ENCODE measurements at regions of chr3 and their contacts with region 1.

Region 1: GRCh38 chr3:136075218-136075808 is 109.8 kb downstream of the PPP2R3A start:
- DNase-seq: peak; percentile 30 to 81 (median 48)
- ATAC-seq: peak; percentile 89
- H3K4me3 ChIP-seq: no peak overlapping the region
- H3K27ac ChIP-seq: no peak overlapping the region
- H3K4me1 ChIP-seq: no peaks in the 10 kb centered on the region
- H3K27me3 ChIP-seq: no peaks in the 10 kb centered on the region
- CTCF ChIP-seq: peak; percentile 66 to 90 (median 75)
- EP300 ChIP-seq: no peak
- POLR2A ChIP-seq: no peak
- RAD21 ChIP-seq: peak; percentile 92 to 95

Region 2: DNA sequence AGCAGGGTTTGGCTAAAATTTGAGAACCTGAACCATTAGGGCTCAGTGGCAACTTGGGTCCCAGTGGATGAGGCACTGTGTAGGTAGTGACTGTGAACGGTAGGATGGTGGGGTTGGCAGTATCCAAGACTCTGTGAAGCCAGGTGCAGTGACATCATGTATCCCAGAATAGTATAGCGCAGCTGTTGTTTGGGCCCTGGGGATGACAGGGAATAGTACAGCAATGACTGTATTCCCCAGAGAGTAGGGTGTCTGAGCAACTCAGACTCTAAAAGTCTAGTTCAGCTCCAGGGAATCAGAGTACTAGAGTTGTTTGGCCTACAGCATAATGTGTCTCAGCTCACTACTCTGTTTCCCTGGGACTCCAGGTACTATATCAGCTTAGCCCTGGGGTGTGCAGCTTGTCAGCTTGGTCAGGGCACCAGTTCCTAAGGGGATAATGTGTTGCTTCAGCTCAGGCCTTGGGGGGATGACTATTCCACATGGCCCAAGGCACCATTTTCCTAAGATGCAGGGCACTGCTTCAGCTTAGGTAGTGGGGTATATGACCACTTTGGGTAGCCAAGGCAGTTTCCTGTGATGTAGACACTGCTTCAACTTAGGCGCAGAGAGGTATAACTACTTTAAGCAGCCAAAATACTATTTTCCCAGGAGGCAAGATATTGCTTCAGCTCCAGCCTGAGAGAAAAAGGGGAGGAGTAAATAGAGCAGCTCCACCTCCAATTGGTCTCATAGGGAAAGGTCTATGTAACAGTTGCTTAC is 130.3 kb before region 1 on chr3:
- CTCF ChIA-PET with region 1: no interaction called
- POLR2A ChIA-PET with region 1: no interaction called
- in situ Hi-C with region 1: no loop called
- intact Hi-C with region 1: no loop called
- DNase-seq: no peak
- ATAC-seq: no peak
- H3K4me3 ChIP-seq: no peak overlapping the region
- H3K27ac ChIP-seq: no peak overlapping the region
- H3K4me1 ChIP-seq: no peaks in the 10 kb centered on the region
- H3K27me3 ChIP-seq: no peaks in the 10 kb centered on the region
- CTCF ChIP-seq: no peak
- EP300 ChIP-seq: no peak
- POLR2A ChIP-seq: no peak
- RAD21 ChIP-seq: no peak

Region 3: GRCh38 chr3:136120373-136121348 is 45.3 kb after region 1 on chr3:
- CTCF ChIA-PET with region 1: no interaction called
- POLR2A ChIA-PET with region 1: no interaction called
- in situ Hi-C with region 1: no loop called
- intact Hi-C with region 1: no loop called
- DNase-seq: no peak
- ATAC-seq: no peak
- H3K4me3 ChIP-seq: no peak overlapping the region
- H3K27ac ChIP-seq: no peak overlapping the region
- H3K4me1 ChIP-seq: no peaks in the 10 kb centered on the region
- H3K27me3 ChIP-seq: no peaks in the 10 kb centered on the region
- CTCF ChIP-seq: no peak
- EP300 ChIP-seq: no peak
- POLR2A ChIP-seq: no peak
- RAD21 ChIP-seq: no peak

Region 4: GRCh38 chr3:136250226-136250902 is 175.1 kb after region 1 on chr3 and contains the start of gene PCCB:
- CTCF ChIA-PET with region 1: no interaction called
- POLR2A ChIA-PET with region 1: no interaction called
- in situ Hi-C with region 1: loop called (anchors 5 kb)
- intact Hi-C with region 1: loop called (anchors 2 kb)
- DNase-seq: peak; percentile 84 to 92 (median 88)
- ATAC-seq: peak; percentile 97
- H3K4me3 ChIP-seq: peak within 1 kb of the TSS; percentile 58
- H3K27ac ChIP-seq: peak within 1 kb of the TSS; percentile 97
- H3K4me1 ChIP-seq: peaks cover 14 to 20% of the 10 kb centered on the region in 2 experiments; a peak in 4 of 5 replicates
- H3K27me3 ChIP-seq: no peaks in the 10 kb centered on the region
- CTCF ChIP-seq: peak; percentile 48 to 60 (median 53)
- EP300 ChIP-seq: no peak
- POLR2A ChIP-seq: peak; percentile 92
- RAD21 ChIP-seq: peak; percentile 16; a peak in 1 of 4 replicates
- polyA plus RNA-seq, gene PCCB: 69.5 to 83.7 TPM

Region 5: DNA sequence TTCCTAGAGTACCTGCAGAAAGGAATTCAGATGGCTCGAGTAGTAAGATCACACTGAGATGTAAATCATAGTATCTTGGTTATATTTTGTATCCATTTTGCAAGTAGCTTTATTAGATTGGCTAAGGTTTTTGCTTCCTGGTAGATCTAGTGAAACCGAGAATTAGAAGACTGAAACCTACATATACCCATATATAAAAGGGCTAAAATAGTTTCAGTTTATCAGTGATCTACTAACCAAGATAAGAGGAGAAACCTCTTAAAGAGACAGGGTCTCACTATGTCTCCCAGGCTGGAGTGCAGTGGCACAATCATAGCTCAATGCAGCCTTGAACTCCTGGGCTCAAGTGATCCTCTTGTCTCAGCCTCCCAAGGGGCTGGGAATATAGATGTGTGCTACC is 310.1 kb after region 1 on chr3:
- CTCF ChIA-PET with region 1: no interaction called
- POLR2A ChIA-PET with region 1: no interaction called
- in situ Hi-C with region 1: no loop called
- intact Hi-C with region 1: loop called (anchors 5 kb)
- DNase-seq: no peak
- ATAC-seq: no peak
- H3K4me3 ChIP-seq: no peak overlapping the region
- H3K27ac ChIP-seq: no peak overlapping the region
- H3K4me1 ChIP-seq: no peaks in the 10 kb centered on the region
- H3K27me3 ChIP-seq: no peaks in the 10 kb centered on the region
- CTCF ChIP-seq: no peak
- EP300 ChIP-seq: no peak
- POLR2A ChIP-seq: no peak
- RAD21 ChIP-seq: no peak

Region 6: DNA sequence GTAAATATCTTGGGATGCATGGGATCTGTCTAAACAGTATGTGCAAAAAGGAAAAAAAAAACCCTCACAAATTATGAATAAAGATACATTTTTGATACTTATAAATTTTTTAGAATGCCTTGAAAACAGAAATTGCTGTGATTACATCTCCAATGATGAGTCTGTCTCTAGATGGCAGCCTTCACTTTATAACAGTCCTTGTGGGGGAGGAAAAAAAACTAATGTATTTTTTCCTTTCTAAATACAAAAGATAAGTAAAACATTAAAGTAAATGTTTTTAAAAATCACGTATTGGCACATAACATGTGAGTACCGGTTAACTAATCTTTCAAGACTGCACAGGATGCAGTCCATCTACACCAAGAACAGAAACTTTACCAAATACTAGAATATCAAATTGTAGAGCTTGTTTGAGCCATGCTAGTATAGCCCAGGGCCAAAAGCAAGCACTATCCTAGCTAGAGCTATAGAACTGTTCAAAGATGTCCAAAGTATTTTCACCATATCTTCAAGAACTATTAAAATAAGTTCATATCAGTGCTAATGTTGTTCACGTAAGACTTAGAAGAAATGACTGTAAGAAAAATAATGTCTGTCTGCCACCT is 470.5 kb after region 1 on chr3:
- CTCF ChIA-PET with region 1: no interaction called
- POLR2A ChIA-PET with region 1: no interaction called
- in situ Hi-C with region 1: no loop called
- intact Hi-C with region 1: loop called (anchors 10 kb)
- DNase-seq: peak in 2 of 4 experiments; percentile 2 to 3
- ATAC-seq: no peak
- H3K4me3 ChIP-seq: no peak overlapping the region
- H3K27ac ChIP-seq: no peak overlapping the region
- H3K4me1 ChIP-seq: no peaks in the 10 kb centered on the region
- H3K27me3 ChIP-seq: no peaks in the 10 kb centered on the region
- CTCF ChIP-seq: peak in 2 of 3 experiments; percentile 20 to 47; a peak in 3 of 6 replicates
- EP300 ChIP-seq: no peak
- POLR2A ChIP-seq: no peak
- RAD21 ChIP-seq: peak; percentile 40 to 63

Region 7: GRCh38 chr3:136752422-136753325 is 677.4 kb after region 1 on chr3:
- CTCF ChIA-PET with region 1: interaction called, 28 read pairs
- POLR2A ChIA-PET with region 1: interaction called, 3 read pairs
- in situ Hi-C with region 1: loop called (anchors 5 kb)
- intact Hi-C with region 1: loop called (anchors 1 kb)
- DNase-seq: peak; percentile 86 to 96 (median 90)
- ATAC-seq: peak; percentile 88
- H3K4me3 ChIP-seq: peak overlapping the region; percentile 57
- H3K27ac ChIP-seq: peak overlapping the region; percentile 98
- H3K4me1 ChIP-seq: peaks cover 0 to 11% of the 10 kb centered on the region in 2 experiments; a peak in 3 of 5 replicates
- H3K27me3 ChIP-seq: no peaks in the 10 kb centered on the region
- CTCF ChIP-seq: peak in 2 of 3 experiments; percentile 25 to 41; a peak in 3 of 6 replicates
- EP300 ChIP-seq: 0 out of 2 replicates have a peak, but pooled peaks have one; percentile 20
- POLR2A ChIP-seq: peak; percentile 86
- RAD21 ChIP-seq: peak; percentile 31 to 62; a peak in 3 of 4 replicates

Region 8: DNA sequence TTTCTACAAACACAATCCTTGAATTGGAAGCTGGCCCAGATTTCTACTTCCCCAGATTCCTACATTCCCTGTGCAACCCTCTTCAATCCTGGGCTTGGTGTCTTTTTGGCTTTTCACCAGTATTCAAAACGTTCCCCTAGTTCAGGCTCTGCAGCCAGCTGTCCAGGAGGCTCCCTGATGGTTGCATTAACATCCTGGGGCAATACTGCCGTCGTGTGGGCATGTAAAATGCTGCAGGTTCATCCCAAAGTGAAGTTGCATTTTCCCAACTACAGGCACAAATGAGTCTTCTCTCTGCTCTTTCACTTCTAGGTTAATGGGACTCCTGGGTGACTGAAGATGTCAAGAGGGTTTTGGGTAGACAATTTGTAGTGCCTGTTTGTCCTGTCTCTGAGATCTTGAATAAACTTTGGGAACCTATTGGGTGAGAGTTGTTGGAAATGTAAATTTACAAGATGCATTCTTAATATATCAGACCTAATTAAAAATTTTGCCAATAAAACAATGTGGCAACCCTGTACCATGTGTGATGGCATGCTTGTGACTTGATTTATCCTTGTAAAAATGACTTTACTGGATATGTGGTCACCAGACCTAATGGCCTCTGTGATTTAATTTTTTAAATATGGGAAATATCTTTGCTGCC is 1717.4 kb after region 1 on chr3:
- CTCF ChIA-PET with region 1: no interaction called
- POLR2A ChIA-PET with region 1: no interaction called
- in situ Hi-C with region 1: no loop called
- intact Hi-C with region 1: loop called (anchors 10 kb)
- DNase-seq: peak; percentile 32 to 49 (median 38)
- ATAC-seq: peak; percentile 52; the same call in 1 of the 3 replicates
- H3K4me3 ChIP-seq: no peak overlapping the region
- H3K27ac ChIP-seq: no peak overlapping the region
- H3K4me1 ChIP-seq: no peaks in the 10 kb centered on the region
- H3K27me3 ChIP-seq: no peaks in the 10 kb centered on the region
- CTCF ChIP-seq: peak; percentile 38 to 51 (median 44); a peak in 4 of 6 replicates
- EP300 ChIP-seq: no peak
- POLR2A ChIP-seq: no peak
- RAD21 ChIP-seq: peak; percentile 54 to 67